GM18951 (cell line): ENCODE measurements at regions of chr12 and their contacts with region 1.

Region 1: DNA sequence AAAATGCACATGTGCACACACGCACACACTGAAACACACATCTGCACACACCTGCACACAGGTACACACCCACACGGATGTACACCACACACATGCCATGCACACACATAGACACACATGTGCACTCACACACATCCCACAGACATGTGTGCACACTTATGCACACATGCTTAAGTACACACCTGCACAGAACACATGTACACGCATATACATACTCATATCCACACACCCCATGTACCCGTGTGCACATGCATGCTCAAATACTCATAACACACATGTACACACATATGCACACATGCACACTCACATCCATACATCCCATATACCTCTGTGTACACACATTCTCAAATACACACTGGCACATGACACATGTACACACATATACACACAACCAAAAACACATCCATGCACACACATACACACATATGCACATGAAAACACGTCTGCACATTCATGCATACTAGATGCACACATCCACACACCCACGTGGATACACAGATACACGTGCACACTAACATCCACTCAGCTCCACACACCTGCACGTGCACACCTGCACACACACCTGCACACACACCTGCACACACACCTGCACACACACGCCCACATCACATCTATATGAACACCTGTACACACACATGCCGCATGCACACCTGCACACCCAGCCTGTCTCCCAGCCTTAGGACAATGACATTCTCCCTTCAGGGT is 336.7 kb downstream of the ADGRD1 start:
- POLR2A ChIP-seq: no peak

Region 2: GRCh38 chr12:131335456-131335855 is 45.0 kb after region 1 on chr12:
- in situ Hi-C with region 1: loop called (anchors 5 kb)
- POLR2A ChIP-seq: no peak

Region 3: DNA sequence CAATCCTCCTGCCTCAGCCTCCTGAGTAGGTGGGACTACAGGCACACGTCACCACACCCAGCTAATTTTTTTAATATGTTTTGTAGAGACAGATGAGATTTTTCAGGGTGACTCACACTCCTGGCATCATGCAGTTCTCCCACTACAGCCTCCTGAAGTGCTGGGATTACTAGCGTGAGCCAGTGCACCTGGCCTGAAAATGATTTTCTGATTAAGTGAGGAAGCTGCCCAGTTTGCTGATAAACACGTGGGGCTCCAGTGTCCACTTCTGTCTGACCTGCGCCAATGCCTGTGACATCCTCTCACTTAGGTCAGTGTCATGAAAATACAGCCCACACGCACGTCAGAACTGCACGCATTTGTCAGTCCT is 383.5 kb after region 1 on chr12:
- in situ Hi-C with region 1: loop called (anchors 10 kb)
- POLR2A ChIP-seq: no peak